Tibial artery (tissue), 4 donors: ENCODE measurements at regions of chr15 and their contacts with region 1.

Region 1: GRCh38 chr15:36877796-36878683 is 222.3 kb downstream of the MEIS2 start:
- DNase-seq: no peak
- H3K4me3 ChIP-seq: peak overlapping the region; percentile 32 to 33
- H3K27ac ChIP-seq: no peak overlapping the region
- H3K4me1 ChIP-seq: peaks cover 0 to 30% (median 15%) of the 10 kb centered on the region in 4 donors
- H3K27me3 ChIP-seq: peaks cover 7 to 36% of the 10 kb centered on the region in 2 donors
- CTCF ChIP-seq: no peak

Region 2: GRCh38 chr15:36501063-36501678 is 376.9 kb before region 1 on chr15:
- intact Hi-C with region 1: loop called (anchors 10 kb)
- DNase-seq: no peak
- H3K4me3 ChIP-seq: no peak overlapping the region
- H3K27ac ChIP-seq: peak overlapping the region in 1 of 2 donors; percentile 4
- H3K4me1 ChIP-seq: peaks cover 0 to 30% (median 5%) of the 10 kb centered on the region in 4 donors
- H3K27me3 ChIP-seq: no peaks in the 10 kb centered on the region
- CTCF ChIP-seq: peak; percentile 64 to 75

Region 3: DNA sequence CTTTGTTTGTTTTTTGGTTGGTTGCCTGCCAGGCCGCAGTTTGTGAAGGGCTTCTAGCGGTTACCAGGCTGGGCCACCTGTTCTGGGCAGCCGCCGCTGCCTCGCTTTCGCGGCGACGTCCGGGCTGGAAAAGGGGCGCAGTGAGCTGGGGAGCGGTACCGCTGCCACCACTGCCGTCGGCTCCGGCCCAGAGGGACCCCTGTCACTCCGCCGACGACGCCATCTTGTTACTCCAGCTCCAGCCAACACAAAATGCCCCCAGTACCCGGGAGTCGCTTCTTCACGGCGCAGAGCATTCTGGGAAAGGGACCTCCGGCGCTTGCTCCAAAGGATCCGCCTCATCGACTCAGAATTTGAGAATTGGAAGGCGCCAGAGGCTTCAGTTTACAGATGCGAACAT is 59.8 kb before region 1 on chr15:
- intact Hi-C with region 1: no loop called
- DNase-seq: no peak
- H3K4me3 ChIP-seq: no peak overlapping the region
- H3K27ac ChIP-seq: no peak overlapping the region
- H3K4me1 ChIP-seq: no peaks in the 10 kb centered on the region
- H3K27me3 ChIP-seq: no peaks in the 10 kb centered on the region
- CTCF ChIP-seq: no peak